PC-9 (cell line): ENCODE measurements at regions of chr5 and their contacts with region 1.

Region 1: GRCh38 chr5:96662725-96663513 is 743 bp downstream of the CAST start:
- DNase-seq: peak; percentile 86 to 96
- H3K4me3 ChIP-seq: peak overlapping the region; percentile 88
- H3K27ac ChIP-seq: peak overlapping the region; percentile 94
- H3K4me1 ChIP-seq: peaks cover 53% of the 10 kb centered on the region
- H3K27me3 ChIP-seq: no peaks in the 10 kb centered on the region
- CTCF ChIP-seq: no peak

Region 2: GRCh38 chr5:96629774-96630173 is 33.1 kb before region 1 on chr5:
- CTCF ChIA-PET with region 1: no interaction called
- POLR2A ChIA-PET with region 1: interaction called, 11 read pairs
- intact Hi-C with region 1: loop called (anchors 1 kb)
- DNase-seq: peak; percentile 62 to 92
- H3K4me3 ChIP-seq: no peak overlapping the region
- H3K27ac ChIP-seq: peak overlapping the region; percentile 61
- H3K4me1 ChIP-seq: peaks cover 33% of the 10 kb centered on the region
- H3K27me3 ChIP-seq: no peaks in the 10 kb centered on the region
- CTCF ChIP-seq: no peak

Region 3: GRCh38 chr5:96651948-96652753 is 10.8 kb before region 1 on chr5:
- CTCF ChIA-PET with region 1: interaction called, 3 read pairs
- POLR2A ChIA-PET with region 1: interaction called, 17 read pairs
- intact Hi-C with region 1: no loop called
- DNase-seq: peak in 1 of 2 experiments; percentile 18
- H3K4me3 ChIP-seq: peak overlapping the region; percentile 11; the same call in 1 of the 2 replicates
- H3K27ac ChIP-seq: peak overlapping the region; percentile 90
- H3K4me1 ChIP-seq: peaks cover 81% of the 10 kb centered on the region
- H3K27me3 ChIP-seq: no peaks in the 10 kb centered on the region
- CTCF ChIP-seq: peak; percentile 47; the same call in 1 of the 2 replicates

Region 4: GRCh38 chr5:96718635-96719077 is 55.7 kb after region 1 on chr5:
- CTCF ChIA-PET with region 1: no interaction called
- POLR2A ChIA-PET with region 1: interaction called, 10 read pairs
- intact Hi-C with region 1: no loop called
- DNase-seq: peak in 1 of 2 experiments; percentile 51
- H3K4me3 ChIP-seq: no peak overlapping the region
- H3K27ac ChIP-seq: no peak overlapping the region
- H3K4me1 ChIP-seq: peaks cover 20% of the 10 kb centered on the region
- H3K27me3 ChIP-seq: no peaks in the 10 kb centered on the region
- CTCF ChIP-seq: no peak

Region 5: GRCh38 chr5:96901384-96901783 is 238.5 kb after region 1 on chr5:
- CTCF ChIA-PET with region 1: no interaction called
- POLR2A ChIA-PET with region 1: no interaction called
- intact Hi-C with region 1: no loop called
- DNase-seq: no peak
- H3K4me3 ChIP-seq: no peak overlapping the region
- H3K27ac ChIP-seq: no peak overlapping the region
- H3K4me1 ChIP-seq: peaks cover 11% of the 10 kb centered on the region
- H3K27me3 ChIP-seq: no peaks in the 10 kb centered on the region
- CTCF ChIP-seq: no peak

Region 6: DNA sequence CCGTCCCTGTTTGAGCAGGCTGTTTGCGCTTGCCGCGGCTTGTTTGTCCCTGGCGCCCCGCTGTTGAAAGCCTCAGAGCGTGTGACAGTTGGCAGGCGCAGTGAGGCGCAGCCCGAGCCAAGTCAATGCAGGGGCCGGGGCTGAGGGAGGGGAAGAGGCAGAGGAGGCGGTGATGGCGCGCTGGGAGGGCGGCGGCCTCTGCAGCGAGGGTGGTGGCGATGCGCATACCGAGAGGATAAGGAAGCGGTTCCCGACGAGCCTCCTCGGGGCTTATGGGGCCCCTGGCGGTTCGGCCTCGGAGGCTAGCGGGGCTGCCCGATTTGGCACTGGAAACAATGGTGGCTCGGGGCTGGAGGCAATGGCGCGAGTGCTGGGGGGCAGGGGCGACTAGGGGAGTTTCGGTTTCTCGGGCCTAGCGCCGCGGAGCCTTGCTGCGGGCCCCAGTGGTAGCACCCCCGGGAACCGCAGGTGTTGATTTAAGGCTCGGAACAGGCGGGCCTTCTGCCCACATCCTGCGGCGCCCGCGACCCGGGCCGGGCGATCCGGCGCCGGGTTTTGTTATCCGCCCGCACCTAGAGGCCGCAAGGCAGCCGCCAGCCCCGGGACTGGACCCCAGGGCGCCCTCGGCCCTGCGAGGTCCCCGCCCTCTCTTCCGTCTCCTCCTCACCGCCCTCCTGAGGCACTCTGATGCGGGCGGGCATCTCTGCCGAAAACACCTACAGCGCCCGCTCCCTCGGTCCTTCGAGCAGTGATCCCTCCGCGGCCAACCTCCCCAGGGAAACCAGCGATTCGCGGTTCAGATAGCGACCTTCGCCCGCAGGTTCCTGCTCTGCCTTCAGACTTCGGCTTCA is 272.0 kb after region 1 on chr5:
- CTCF ChIA-PET with region 1: no interaction called
- POLR2A ChIA-PET with region 1: no interaction called
- intact Hi-C with region 1: loop called (anchors 10 kb)
- DNase-seq: peak; percentile 87 to 97
- H3K4me3 ChIP-seq: peak overlapping the region; percentile 94
- H3K27ac ChIP-seq: peak overlapping the region; percentile 80
- H3K4me1 ChIP-seq: peaks cover 31% of the 10 kb centered on the region
- H3K27me3 ChIP-seq: no peaks in the 10 kb centered on the region
- CTCF ChIP-seq: no peak; the same call in 1 of the 2 replicates